OCI-LY7 (cell line): ENCODE measurements at regions of chr15 and their contacts with region 1.

Region 1: GRCh38 chr15:72319985-72320671 is at the start of gene CELF6:
- DNase-seq: no peak
- H3K4me3 ChIP-seq: peak within 1 kb of the TSS; percentile 9
- H3K27ac ChIP-seq: no peak within 1 kb of the TSS
- H3K4me1 ChIP-seq: no peaks in the 10 kb centered on the region
- CTCF ChIP-seq: no peak
- total RNA-seq, gene CELF6: 0.62 and 0.79 TPM in 2 replicates

Region 2: DNA sequence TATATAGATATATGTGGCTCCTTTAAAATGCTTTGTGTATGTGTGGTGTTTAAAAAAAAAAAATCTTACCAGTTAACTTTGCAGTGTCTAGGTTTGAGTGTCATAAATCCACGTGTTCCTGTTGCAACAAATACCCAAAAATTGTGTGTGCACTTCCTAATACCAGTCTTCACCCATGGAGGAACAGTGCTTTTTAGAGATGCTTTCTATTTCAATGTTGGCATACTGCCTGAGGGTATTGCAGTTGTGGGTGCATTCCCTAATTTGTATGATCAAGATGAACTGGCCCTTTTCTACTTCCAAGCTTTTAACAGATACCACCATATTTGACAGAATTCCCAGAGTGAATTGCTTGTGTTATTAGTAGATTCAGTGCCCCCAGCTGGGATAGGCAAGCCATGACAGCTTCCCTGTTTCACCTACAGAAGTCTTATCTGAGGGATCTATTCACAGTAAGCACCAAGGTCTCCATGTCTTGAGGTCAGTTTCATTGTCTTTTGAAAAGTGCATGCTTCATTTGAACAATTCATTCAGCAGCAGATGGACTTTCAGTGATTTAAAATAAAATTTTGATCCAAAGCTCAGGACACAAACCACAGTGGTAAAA is 265.5 kb after region 1 on chr15:
- CTCF ChIA-PET with region 1: no interaction called
- POLR2A ChIA-PET with region 1: no interaction called
- intact Hi-C with region 1: loop called (anchors 10 kb)
- DNase-seq: no peak
- H3K4me3 ChIP-seq: no peak overlapping the region
- H3K27ac ChIP-seq: no peak overlapping the region
- H3K4me1 ChIP-seq: no peaks in the 10 kb centered on the region
- CTCF ChIP-seq: peak; percentile 34; the same call in 1 of the 2 replicates

Region 3: DNA sequence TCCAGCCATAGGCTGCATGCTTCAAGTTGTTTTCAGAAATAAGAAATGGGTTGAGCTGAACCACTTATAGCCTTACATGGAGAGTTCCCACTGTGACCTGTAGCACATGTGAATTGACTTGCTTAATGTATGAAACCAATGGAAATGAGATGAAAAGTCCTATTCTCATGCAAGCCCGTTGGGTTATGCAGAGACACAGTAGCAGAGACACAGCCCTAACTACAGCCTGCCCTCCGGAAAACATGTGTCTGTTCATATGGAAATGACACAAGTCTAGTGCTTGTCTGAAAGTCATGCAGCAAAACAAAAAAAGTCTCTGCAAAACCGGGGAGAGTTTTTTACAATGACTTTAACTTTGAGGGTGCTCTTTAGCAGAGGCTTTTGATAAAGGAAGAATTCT is 351.4 kb after region 1 on chr15:
- CTCF ChIA-PET with region 1: no interaction called
- POLR2A ChIA-PET with region 1: no interaction called
- intact Hi-C with region 1: loop called (anchors 10 kb)
- DNase-seq: no peak
- H3K4me3 ChIP-seq: no peak overlapping the region
- H3K27ac ChIP-seq: no peak overlapping the region
- H3K4me1 ChIP-seq: peaks cover 5% of the 10 kb centered on the region
- CTCF ChIP-seq: no peak